ENCODE measurements at regions of chr6 and their contacts with region 1.

Region 1: GRCh38 chr6:24520929-24521546 is 26.3 kb downstream of the ALDH5A1 start:
- DNase-seq: peak; percentile 25 to 70
- H3K4me3 ChIP-seq: no peak overlapping the region
- H3K27ac ChIP-seq: no peak overlapping the region
- H3K4me1 ChIP-seq: no peaks in the 10 kb centered on the region
- H3K27me3 ChIP-seq: no peaks in the 10 kb centered on the region
- CTCF ChIP-seq: peak; percentile 88 to 93 (median 89)
- EP300 ChIP-seq: no peak
- POLR2A ChIP-seq: no peak
- RAD21 ChIP-seq: peak; percentile 55 to 74

Region 2: DNA sequence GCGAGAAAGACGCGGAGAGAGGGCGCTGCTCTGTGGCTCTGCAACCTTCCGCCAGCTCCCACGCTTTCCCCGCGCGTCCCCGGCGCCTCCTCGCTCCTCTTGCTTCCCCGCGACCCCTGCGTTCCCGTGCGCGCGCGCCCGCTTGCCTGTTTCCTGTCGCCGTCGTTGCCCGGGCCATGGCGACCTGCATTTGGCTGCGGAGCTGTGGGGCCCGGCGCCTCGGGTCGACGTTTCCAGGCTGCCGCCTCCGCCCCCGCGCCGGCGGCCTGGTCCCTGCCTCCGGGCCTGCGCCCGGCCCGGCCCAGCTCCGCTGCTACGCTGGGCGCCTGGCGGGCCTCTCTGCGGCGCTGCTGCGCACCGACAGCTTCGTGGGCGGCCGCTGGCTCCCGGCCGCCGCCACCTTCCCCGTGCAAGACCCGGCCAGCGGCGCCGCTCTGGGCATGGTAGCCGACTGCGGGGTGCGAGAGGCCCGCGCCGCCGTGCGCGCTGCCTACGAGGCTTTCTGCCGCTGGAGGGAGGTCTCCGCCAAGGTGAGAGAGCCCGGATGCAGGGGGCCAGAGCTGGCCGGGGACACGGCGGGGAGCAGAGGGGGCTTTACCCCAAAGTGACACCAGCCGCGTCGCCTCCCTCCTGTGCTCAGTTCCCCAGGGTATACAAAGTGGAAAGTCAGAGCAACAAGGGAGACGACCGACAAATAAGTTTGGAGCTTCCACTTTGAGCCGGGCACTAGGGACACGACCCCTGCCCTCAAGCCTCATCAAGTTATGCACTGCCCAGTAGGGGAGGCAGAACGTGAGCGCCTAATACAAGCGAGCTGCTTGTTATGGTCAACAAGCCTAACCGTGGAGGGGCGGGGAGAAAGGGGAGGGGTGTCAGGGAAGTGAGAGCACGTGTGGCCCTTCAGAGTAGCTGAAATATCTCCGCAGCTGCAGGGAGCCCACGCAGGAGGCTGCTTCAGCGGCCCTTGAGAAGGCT is 25.9 kb before region 1 on chr6 and contains the start of gene ALDH5A1:
- CTCF ChIA-PET with region 1: interaction called, 67 read pairs
- POLR2A ChIA-PET with region 1: interaction called, 5 read pairs
- DNase-seq: peak; percentile 39 to 84
- H3K4me3 ChIP-seq: peak within 1 kb of the TSS; percentile 48 to 72 (median 66)
- H3K27ac ChIP-seq: no peak within 1 kb of the TSS
- H3K4me1 ChIP-seq: peaks cover 0 to 7% (median 3%) of the 10 kb centered on the region in 4 experiments; a peak in 4 of 7 replicates
- H3K27me3 ChIP-seq: peaks cover 0 to 24% (median 8%) of the 10 kb centered on the region in 4 experiments; a peak in 6 of 7 replicates
- CTCF ChIP-seq: peak; percentile 35 to 40 (median 36)
- EP300 ChIP-seq: no peak
- POLR2A ChIP-seq: peak in 1 of 2 experiments; percentile 12; a peak in 1 of 3 replicates
- RAD21 ChIP-seq: peak; percentile 50 to 65
- total RNA-seq, gene ALDH5A1: 2.4 and 4.1 TPM in 2 replicates

Region 3: GRCh38 chr6:24547243-24547642 is 26.2 kb after region 1 on chr6:
- CTCF ChIA-PET with region 1: interaction called, 37 read pairs
- POLR2A ChIA-PET with region 1: no interaction called
- DNase-seq: peak; percentile 31 to 54
- H3K4me3 ChIP-seq: no peak overlapping the region
- H3K27ac ChIP-seq: no peak overlapping the region
- H3K4me1 ChIP-seq: no peaks in the 10 kb centered on the region
- H3K27me3 ChIP-seq: no peaks in the 10 kb centered on the region
- CTCF ChIP-seq: peak; percentile 39 to 50 (median 46); a peak in 3 of 4 replicates
- EP300 ChIP-seq: no peak
- POLR2A ChIP-seq: no peak
- RAD21 ChIP-seq: peak; percentile 62 to 73

Region 4: GRCh38 chr6:24566020-24566767 is 45.2 kb after region 1 on chr6:
- CTCF ChIA-PET with region 1: interaction called, 19 read pairs
- POLR2A ChIA-PET with region 1: interaction called, 4 read pairs
- DNase-seq: no peak
- H3K4me3 ChIP-seq: no peak overlapping the region
- H3K27ac ChIP-seq: no peak overlapping the region
- H3K4me1 ChIP-seq: no peaks in the 10 kb centered on the region
- H3K27me3 ChIP-seq: no peaks in the 10 kb centered on the region
- CTCF ChIP-seq: no peak
- EP300 ChIP-seq: no peak
- POLR2A ChIP-seq: no peak
- RAD21 ChIP-seq: no peak

Region 5: GRCh38 chr6:24666641-24667377 is 145.8 kb after region 1 on chr6 and contains the starts of genes ACOT13 and TDP2:
- CTCF ChIA-PET with region 1: interaction called, 11 read pairs
- POLR2A ChIA-PET with region 1: no interaction called
- DNase-seq: peak; percentile 93 to 97
- H3K4me3 ChIP-seq: peak within 1 kb of the TSS; percentile 85 to 99 (median 93)
- H3K27ac ChIP-seq: peak within 1 kb of the TSS; percentile 92
- H3K4me1 ChIP-seq: peaks cover 0 to 5% (median 0%) of the 10 kb centered on the region in 4 experiments; a peak in 3 of 7 replicates
- H3K27me3 ChIP-seq: no peaks in the 10 kb centered on the region
- CTCF ChIP-seq: peak; percentile 47 to 63 (median 58)
- EP300 ChIP-seq: peak in 1 of 2 experiments; percentile 57; a peak in 1 of 3 replicates
- POLR2A ChIP-seq: peak; percentile 86 to 94
- RAD21 ChIP-seq: peak; percentile 47 to 63
- total RNA-seq, gene ACOT13: 40.6 and 42.8 TPM in 2 replicates
- total RNA-seq, gene TDP2: 51.6 and 52.6 TPM in 2 replicates